Activated CD4-positive, alpha-beta memory T cell treated with anti-CD3 and anti-CD28 coated beads for 36 hours (primary cell): ENCODE measurements at regions of chr2 and their contacts with region 1.

Region 1: DNA sequence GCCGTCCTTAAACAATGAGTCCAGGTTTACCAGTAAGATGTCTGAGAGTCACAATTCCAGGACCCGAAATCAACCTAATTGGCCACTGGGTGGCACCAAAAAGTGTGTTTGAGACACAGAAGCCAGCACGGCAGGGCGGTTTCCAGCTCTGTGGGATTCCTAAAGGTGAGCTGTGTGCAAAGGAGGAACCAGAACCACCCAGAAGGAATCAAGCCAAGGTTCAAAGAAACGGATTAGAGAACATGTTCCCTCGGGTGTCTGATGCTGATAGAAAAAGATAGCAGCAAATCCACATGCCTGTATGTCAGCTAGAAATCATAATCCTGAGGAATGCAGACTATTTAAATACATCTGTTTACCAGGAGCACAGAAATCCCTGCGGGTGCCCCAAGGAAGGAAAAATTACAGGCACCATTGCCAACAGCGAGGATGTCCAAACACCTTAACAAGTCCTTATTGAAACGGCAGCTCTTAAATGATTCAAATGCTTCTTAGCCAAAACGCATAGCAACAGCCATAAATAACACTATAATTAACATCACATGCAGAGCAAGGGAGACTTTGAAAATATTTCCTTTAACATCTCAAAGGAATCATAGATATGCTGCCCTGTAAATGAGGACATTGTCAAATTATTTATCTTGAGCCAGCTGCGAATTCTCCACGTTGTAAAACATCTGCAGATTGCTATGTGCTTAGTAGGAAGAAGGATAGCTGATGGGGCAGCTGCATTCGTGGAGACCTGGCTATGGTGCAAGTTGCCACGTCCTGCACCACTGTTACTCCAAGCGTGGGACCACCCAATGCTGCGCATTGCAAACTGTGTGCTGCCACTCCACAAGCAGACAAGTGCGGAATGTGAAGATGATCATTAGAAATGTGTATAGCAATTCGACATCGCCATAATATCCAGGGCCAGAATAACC is 318.7 kb upstream of the NCKAP5 start:
- DNase-seq: peak; percentile 61
- H3K4me3 Mint-ChIP-seq: no peak overlapping the region
- H3K27ac Mint-ChIP-seq: no peak overlapping the region
- H3K4me1 Mint-ChIP-seq: no peaks in the 10 kb centered on the region
- H3K27me3 Mint-ChIP-seq: peaks cover 5% of the 10 kb centered on the region

Region 2: DNA sequence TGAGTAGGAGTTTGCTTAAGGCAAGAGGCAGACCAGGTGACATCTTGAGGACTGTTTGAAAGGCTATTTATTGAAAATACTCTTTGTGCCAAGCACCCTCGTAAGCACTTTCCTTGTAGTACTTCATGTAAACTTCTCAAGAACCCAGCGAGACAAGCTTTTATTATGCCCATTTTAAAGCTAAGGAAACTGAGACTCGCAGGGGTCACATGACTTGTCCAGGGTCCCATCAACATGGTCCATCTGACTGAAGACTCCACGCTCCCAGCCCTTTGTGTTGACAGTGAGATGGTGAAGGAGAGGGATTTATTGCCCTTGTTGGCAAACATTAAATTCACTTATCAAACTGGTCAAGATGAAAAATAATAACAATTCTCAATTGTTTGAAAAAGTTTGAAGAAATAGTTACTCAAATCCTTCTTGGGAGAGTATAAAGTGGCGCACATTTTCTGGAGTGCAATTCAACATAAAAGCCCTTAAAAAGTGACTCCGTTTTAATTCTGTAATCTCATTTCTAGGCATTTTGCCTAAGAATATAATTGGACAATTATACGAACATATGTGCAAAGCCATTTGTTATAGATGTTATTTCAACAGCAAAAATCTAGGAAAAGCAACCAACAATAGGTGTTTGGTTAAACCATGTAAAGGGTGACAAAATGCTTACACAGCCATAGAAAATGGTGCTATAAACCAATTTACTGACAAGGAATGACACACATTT is 48.2 kb before region 1 on chr2:
- CTCF ChIA-PET with region 1: no interaction called
- POLR2A ChIA-PET with region 1: no interaction called
- intact Hi-C with region 1: no loop called
- DNase-seq: no peak
- H3K4me3 Mint-ChIP-seq: no peak overlapping the region
- H3K27ac Mint-ChIP-seq: no peak overlapping the region
- H3K4me1 Mint-ChIP-seq: no peaks in the 10 kb centered on the region
- H3K27me3 Mint-ChIP-seq: no peaks in the 10 kb centered on the region

Region 3: DNA sequence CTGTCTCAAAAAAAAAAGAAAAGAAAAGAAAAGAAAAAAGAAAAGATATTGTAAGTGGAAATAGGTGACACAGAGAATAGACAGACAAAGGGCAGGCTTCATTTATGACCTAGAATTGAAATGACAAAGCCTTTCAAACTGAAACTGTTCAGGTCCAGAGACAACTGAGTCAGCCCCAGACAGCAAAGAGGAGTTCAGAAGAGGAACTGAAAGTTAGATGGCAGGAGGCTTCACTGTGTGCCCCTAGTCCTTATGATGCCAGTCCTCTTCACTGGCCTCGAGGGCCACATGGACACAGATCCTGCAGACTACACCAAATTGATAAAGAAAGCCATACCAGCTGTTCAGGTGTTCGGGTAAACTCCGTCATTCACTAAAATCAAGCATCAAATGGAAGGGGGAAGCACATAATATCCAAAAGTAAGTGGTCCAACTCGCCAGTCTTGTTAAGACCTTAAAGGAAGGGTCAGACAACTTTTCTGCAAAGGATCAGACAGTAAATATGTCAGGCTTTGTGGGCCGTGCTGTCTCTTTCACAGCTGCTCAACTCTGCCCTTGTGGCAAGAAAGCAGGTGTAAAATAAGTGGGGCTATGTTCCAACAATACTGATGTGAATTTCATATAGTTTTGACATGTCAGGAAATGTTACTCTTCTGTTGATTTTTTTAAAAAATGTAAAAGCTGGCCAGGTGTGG is 135.0 kb after region 1 on chr2:
- CTCF ChIA-PET with region 1: interaction called, 3 read pairs
- POLR2A ChIA-PET with region 1: no interaction called
- intact Hi-C with region 1: loop called (anchors 10 kb)
- DNase-seq: peak; percentile 22
- H3K4me3 Mint-ChIP-seq: no peak overlapping the region
- H3K27ac Mint-ChIP-seq: no peak overlapping the region
- H3K4me1 Mint-ChIP-seq: peaks cover 23% of the 10 kb centered on the region
- H3K27me3 Mint-ChIP-seq: peaks cover 7% of the 10 kb centered on the region

Region 4: DNA sequence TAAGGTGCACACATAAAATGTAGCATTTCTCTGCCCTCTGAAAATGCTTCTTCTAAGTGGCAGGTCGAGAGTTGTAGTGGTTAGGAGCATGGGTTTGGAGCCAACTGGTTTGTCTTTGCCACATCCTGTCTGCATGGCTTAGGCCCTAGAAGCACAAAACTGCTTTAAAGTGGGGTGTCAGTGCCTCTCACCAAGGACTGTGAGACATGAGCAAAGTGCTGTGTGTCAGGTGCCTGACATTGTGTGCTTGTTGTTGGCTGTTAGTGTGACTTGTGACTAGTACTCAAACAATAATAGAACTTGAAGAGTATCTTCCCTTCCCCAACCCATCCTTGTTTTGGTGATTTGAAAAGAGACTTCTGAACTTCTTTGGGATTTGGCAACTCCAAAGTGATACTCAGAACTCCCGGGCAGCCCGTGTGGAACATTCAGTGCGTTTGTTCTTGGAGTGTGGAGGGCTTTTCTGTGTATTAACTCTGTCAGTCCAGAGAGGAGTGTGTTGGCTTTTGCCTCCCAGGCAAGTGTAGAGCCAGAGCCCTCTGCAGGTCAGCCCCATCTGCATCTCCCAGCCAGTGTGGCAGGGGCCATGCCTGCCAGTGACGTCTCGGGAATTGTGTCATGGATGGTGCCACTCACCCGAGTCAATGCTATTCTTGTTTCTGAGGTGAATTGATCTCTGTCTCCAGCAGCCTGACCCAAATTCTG is 371.8 kb after region 1 on chr2:
- CTCF ChIA-PET with region 1: no interaction called
- POLR2A ChIA-PET with region 1: no interaction called
- intact Hi-C with region 1: loop called (anchors 10 kb)
- DNase-seq: peak; percentile 71
- H3K4me3 Mint-ChIP-seq: no peak overlapping the region
- H3K27ac Mint-ChIP-seq: peak overlapping the region; percentile 10
- H3K4me1 Mint-ChIP-seq: peaks cover 75% of the 10 kb centered on the region
- H3K27me3 Mint-ChIP-seq: no peaks in the 10 kb centered on the region

Region 5: GRCh38 chr2:134452042-134452733 is 565.2 kb after region 1 on chr2:
- CTCF ChIA-PET with region 1: interaction called, 12 read pairs
- POLR2A ChIA-PET with region 1: no interaction called
- intact Hi-C with region 1: loop called (anchors 2 kb)
- DNase-seq: no peak
- H3K4me3 Mint-ChIP-seq: no peak overlapping the region
- H3K27ac Mint-ChIP-seq: no peak overlapping the region
- H3K4me1 Mint-ChIP-seq: no peaks in the 10 kb centered on the region
- H3K27me3 Mint-ChIP-seq: no peaks in the 10 kb centered on the region